MCF 10A (cell line): ENCODE measurements at regions of chr1 and their contacts with region 1.

Region 1: GRCh38 chr1:169601093-169601881 is 15.0 kb upstream of the F5 start:
- DNase-seq: peak; percentile 55
- H3K4me3 Mint-ChIP-seq: no peak overlapping the region
- H3K27ac Mint-ChIP-seq: no peak overlapping the region
- H3K4me1 Mint-ChIP-seq: no peaks in the 10 kb centered on the region
- H3K27me3 Mint-ChIP-seq: peaks cover 34% of the 10 kb centered on the region
- CTCF ChIP-seq: peak; percentile 42

Region 2: DNA sequence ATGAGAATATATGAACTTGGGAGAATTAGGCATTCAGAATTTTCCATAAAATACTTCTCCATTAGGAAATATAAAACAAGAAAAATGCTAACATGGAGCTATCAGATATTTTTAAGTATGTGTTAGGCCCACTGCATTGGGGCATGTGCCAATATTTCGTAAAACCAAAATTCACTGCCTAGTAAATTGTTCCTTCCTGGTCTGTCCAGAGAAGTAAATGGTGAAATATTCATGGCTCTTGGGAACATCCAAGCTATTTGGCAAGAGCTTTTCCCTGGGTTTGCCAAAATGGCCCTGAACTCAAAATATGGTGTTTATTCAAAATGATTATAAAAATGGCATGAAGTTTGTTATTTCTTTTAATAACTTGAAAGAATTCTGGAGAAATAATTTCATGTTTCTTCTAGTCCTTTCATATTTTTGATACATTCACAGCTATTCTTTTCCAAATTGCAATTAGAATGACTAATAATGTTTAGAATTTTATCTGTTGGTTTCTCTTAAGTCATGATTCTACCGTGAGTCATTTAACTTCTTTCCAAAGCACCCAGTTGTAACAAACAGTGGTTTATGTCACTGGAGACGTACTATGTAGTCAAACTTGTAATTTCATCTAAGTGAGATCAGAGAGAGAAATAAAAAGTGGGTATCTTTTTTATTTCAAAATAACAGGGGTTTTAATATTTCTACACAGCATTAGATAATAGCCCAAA is 89.8 kb before region 1 on chr1:
- CTCF ChIA-PET with region 1: no interaction called
- POLR2A ChIA-PET with region 1: no interaction called
- intact Hi-C with region 1: no loop called
- DNase-seq: peak; percentile 86
- H3K4me3 Mint-ChIP-seq: peak overlapping the region; percentile 5
- H3K27ac Mint-ChIP-seq: peak overlapping the region; percentile 86
- H3K4me1 Mint-ChIP-seq: peaks cover 62% of the 10 kb centered on the region
- H3K27me3 Mint-ChIP-seq: no peaks in the 10 kb centered on the region
- CTCF ChIP-seq: no peak

Region 3: DNA sequence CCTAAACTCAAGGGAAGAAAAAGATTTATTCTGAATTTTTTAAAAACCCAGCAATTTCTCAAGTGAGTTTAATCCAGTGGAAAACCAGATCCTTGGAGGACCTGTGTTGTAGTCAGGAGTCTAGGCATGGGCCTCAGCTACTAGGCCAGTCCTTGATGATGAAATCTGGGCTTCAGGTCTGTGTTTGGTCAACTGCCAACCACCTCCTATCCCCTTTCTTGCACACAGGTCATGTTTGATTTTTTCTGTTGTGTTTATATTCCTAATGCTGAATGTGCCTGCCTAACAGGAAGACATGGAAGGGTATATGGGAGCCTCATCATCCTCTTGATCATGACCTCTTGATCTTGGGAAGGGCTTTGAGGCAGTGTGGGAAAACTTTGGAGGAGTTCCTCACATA is 77.4 kb before region 1 on chr1:
- CTCF ChIA-PET with region 1: no interaction called
- POLR2A ChIA-PET with region 1: no interaction called
- intact Hi-C with region 1: no loop called
- DNase-seq: no peak
- H3K4me3 Mint-ChIP-seq: no peak overlapping the region
- H3K27ac Mint-ChIP-seq: no peak overlapping the region
- H3K4me1 Mint-ChIP-seq: peaks cover 16% of the 10 kb centered on the region
- H3K27me3 Mint-ChIP-seq: no peaks in the 10 kb centered on the region
- CTCF ChIP-seq: no peak

Region 4: DNA sequence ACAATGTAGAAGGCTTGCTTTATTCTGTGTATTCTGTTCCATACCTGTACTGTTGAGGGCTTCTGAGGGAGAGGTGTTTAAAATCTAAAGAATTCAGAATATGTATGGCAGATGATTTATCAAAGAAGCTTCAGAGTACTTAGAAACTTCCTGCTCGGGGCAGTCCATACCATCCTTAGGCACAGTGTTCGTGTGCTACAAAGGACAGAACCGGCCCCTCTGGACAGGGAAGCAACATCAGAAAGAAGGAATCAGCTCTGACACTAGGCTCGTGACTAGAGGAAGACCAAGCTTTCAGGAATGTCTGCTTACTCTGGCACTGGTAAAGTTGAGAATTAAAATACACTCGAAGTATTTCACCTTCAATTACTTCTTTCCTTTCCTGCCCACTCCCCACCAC is 14.5 kb after region 1 on chr1:
- CTCF ChIA-PET with region 1: interaction called, 33 read pairs
- POLR2A ChIA-PET with region 1: no interaction called
- intact Hi-C with region 1: no loop called
- DNase-seq: no peak
- H3K4me3 Mint-ChIP-seq: no peak overlapping the region
- H3K27ac Mint-ChIP-seq: no peak overlapping the region
- H3K4me1 Mint-ChIP-seq: no peaks in the 10 kb centered on the region
- H3K27me3 Mint-ChIP-seq: peaks cover 39% of the 10 kb centered on the region
- CTCF ChIP-seq: no peak

Region 5: GRCh38 chr1:169644298-169644697 is 43.0 kb after region 1 on chr1:
- CTCF ChIA-PET with region 1: interaction called, 10 read pairs
- POLR2A ChIA-PET with region 1: no interaction called
- intact Hi-C with region 1: no loop called
- DNase-seq: no peak
- H3K4me3 Mint-ChIP-seq: no peak overlapping the region
- H3K27ac Mint-ChIP-seq: no peak overlapping the region
- H3K4me1 Mint-ChIP-seq: no peaks in the 10 kb centered on the region
- H3K27me3 Mint-ChIP-seq: peaks cover 41% of the 10 kb centered on the region
- CTCF ChIP-seq: no peak

Region 6: DNA sequence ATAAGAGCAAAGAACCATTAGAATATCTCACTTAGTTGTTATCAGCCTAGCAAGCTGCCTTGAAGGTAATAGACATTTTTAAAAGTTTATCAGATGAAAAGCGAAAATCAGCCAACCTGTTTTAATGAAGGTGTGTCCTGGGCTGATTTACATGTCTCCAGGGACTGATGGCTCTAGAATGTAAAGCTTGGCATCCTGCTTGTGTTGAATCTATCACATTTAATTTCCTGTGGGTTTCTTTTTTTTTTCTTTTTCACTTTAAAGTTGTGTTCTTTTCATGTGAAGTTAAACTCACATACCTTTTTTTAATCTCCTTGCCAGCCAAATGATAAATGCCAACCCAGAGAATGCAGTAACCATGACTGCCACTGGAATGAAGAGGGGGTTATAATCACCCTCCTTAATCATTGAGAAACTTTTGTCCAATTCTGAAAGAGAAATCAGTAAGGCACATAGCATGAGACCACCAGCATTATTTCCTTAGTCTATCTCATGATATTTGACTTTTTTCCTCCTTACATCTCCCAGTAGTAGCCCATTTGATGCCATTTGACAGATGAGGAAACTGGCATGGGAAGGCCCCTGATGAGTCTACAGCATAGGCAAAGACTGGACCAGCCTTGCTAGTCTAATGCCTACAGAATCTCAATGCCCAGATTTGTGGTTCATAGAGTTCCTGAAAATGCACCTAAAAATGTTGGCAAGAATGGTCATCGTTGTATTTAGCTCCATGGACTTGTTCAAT is 100.1 kb after region 1 on chr1:
- CTCF ChIA-PET with region 1: interaction called, 30 read pairs
- POLR2A ChIA-PET with region 1: interaction called, 4 read pairs
- intact Hi-C with region 1: no loop called
- DNase-seq: no peak
- H3K4me3 Mint-ChIP-seq: no peak overlapping the region
- H3K27ac Mint-ChIP-seq: no peak overlapping the region
- H3K4me1 Mint-ChIP-seq: no peaks in the 10 kb centered on the region
- H3K27me3 Mint-ChIP-seq: peaks cover 17% of the 10 kb centered on the region
- CTCF ChIP-seq: no peak

Region 7: GRCh38 chr1:169809370-169810095 is 208.2 kb after region 1 on chr1:
- CTCF ChIA-PET with region 1: interaction called, 41 read pairs
- POLR2A ChIA-PET with region 1: no interaction called
- intact Hi-C with region 1: loop called (anchors 1 kb)
- DNase-seq: peak; percentile 60
- H3K4me3 Mint-ChIP-seq: no peak overlapping the region
- H3K27ac Mint-ChIP-seq: no peak overlapping the region
- H3K4me1 Mint-ChIP-seq: no peaks in the 10 kb centered on the region
- H3K27me3 Mint-ChIP-seq: no peaks in the 10 kb centered on the region
- CTCF ChIP-seq: peak; percentile 59